ENCODE measurements at regions of chr6 and their contacts with region 1.

Region 1: GRCh38 chr6:158972241-158973233 is 27.5 kb downstream of the RSPH3 start:
- DNase-seq: peak in 1 of 7 donors; percentile 10
- H3K4me3 ChIP-seq: no peak overlapping the region
- H3K27ac ChIP-seq: peak overlapping the region in 2 of 5 donors; percentile 9 to 31
- H3K4me1 ChIP-seq: peaks cover 9 to 11% of the 10 kb centered on the region in 2 donors
- H3K27me3 ChIP-seq: no peaks in the 10 kb centered on the region
- CTCF ChIP-seq: peak; percentile 32 to 81 (median 63)
- POLR2A ChIP-seq: no peak

Region 2: DNA sequence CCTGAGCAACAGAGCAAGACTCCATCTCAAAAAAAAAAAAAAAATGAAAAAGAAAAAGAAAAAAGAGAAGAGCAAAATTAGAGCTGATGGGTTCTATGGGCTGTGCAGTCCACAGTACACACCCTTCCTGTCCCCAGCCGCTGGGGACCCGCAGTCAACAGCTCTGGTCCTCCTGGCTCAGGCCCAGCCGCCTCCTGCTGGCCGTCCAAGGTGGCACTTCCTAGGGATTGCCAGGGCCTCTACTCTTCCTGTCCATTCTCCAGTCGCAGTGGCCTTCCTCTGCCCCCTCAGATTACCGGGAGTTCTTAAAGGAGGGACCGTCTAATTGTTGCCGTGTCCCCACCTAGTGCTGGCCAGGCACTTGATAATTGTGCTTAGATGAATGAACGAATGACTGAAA is 1691.0 kb before region 1 on chr6:
- intact Hi-C with region 1: no loop called
- DNase-seq: peak in 5 of 7 donors; percentile 51 to 75 (median 53)
- H3K4me3 ChIP-seq: no peak overlapping the region
- H3K27ac ChIP-seq: no peak overlapping the region
- H3K4me1 ChIP-seq: no peaks in the 10 kb centered on the region
- H3K27me3 ChIP-seq: no peaks in the 10 kb centered on the region
- CTCF ChIP-seq: peak; percentile 17 to 54 (median 27)
- POLR2A ChIP-seq: no peak

Region 3: GRCh38 chr6:158704181-158704822 is 268.2 kb before region 1 on chr6:
- intact Hi-C with region 1: loop called (anchors 5 kb)
- DNase-seq: peak; percentile 82 to 89 (median 86)
- H3K4me3 ChIP-seq: peak overlapping the region in 1 of 4 donors; percentile 48
- H3K27ac ChIP-seq: peak overlapping the region in 4 of 5 donors; percentile 19 to 66 (median 36)
- H3K4me1 ChIP-seq: peaks cover 16 to 28% of the 10 kb centered on the region in 2 donors
- H3K27me3 ChIP-seq: no peaks in the 10 kb centered on the region
- CTCF ChIP-seq: peak; percentile 96 to 99 (median 98)
- POLR2A ChIP-seq: no peak

Region 4: GRCh38 chr6:158819213-158819909 is 153.2 kb before region 1 on chr6 and contains the start of gene EZR:
- intact Hi-C with region 1: loop called in 1 of 2 experiments (anchors 10 kb)
- DNase-seq: peak; percentile 77 to 86 (median 80)
- H3K4me3 ChIP-seq: peak within 1 kb of the TSS; percentile 37 to 83 (median 66)
- H3K27ac ChIP-seq: peak within 1 kb of the TSS; percentile 64 to 97 (median 91)
- H3K4me1 ChIP-seq: peaks cover 18 to 27% of the 10 kb centered on the region in 2 donors
- H3K27me3 ChIP-seq: no peaks in the 10 kb centered on the region
- CTCF ChIP-seq: no peak
- POLR2A ChIP-seq: peak in 1 of 2 donors; percentile 79
- total RNA-seq, gene EZR: 190 to 476 (median 386) TPM

Region 5: GRCh38 chr6:159716247-159717096 is 743.9 kb after region 1 on chr6:
- intact Hi-C with region 1: no loop called
- DNase-seq: peak; percentile 65 to 90 (median 85)
- H3K4me3 ChIP-seq: peak overlapping the region in 1 of 4 donors; percentile 35
- H3K27ac ChIP-seq: peak overlapping the region; percentile 90 to 97 (median 92)
- H3K4me1 ChIP-seq: peaks cover 7 to 27% of the 10 kb centered on the region in 2 donors
- H3K27me3 ChIP-seq: no peaks in the 10 kb centered on the region
- CTCF ChIP-seq: no peak
- POLR2A ChIP-seq: peak in 1 of 2 donors; percentile 27